AG04450 (cell line): ENCODE measurements at regions of chr3 and their contacts with region 1.

Region 1: GRCh38 chr3:41198950-41199865 is at the start of gene CTNNB1:
- DNase-seq: peak; percentile 94
- H3K4me3 ChIP-seq: peak within 1 kb of the TSS; percentile 94
- H3K27ac ChIP-seq: peak within 1 kb of the TSS; percentile 89
- H3K27me3 ChIP-seq: no peaks in the 10 kb centered on the region
- CTCF ChIP-seq: no peak
- polyA plus RNA-seq, gene CTNNB1: 352 and 453 TPM in 2 replicates

Region 2: DNA sequence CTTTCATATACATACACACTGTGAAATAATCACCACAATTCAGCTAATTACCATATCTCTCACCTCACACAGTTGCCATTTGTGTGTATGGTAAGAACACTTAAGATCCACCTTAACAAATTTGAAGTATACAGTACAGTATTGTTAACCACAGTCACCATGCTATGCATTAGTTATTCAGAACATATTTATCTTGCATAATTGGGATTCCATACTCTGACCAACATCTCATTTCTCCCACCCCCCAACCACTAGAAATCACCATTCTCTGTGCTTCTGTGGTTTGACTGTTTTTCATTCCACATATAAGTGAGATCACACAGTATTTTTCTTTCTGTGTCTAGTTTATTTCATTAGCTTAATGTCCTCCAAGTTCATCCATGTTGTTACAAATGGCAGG is 247.6 kb before region 1 on chr3:
- CTCF ChIA-PET with region 1: no interaction called
- POLR2A ChIA-PET with region 1: no interaction called
- DNase-seq: no peak
- H3K4me3 ChIP-seq: no peak overlapping the region
- H3K27ac ChIP-seq: no peak overlapping the region
- H3K27me3 ChIP-seq: no peaks in the 10 kb centered on the region
- CTCF ChIP-seq: no peak

Region 3: GRCh38 chr3:41175365-41175764 is 23.8 kb before region 1 on chr3:
- CTCF ChIA-PET with region 1: no interaction called
- POLR2A ChIA-PET with region 1: interaction called, 14 read pairs
- DNase-seq: no peak
- H3K4me3 ChIP-seq: no peak overlapping the region
- H3K27ac ChIP-seq: no peak overlapping the region
- H3K27me3 ChIP-seq: peaks cover 14% of the 10 kb centered on the region
- CTCF ChIP-seq: no peak

Region 4: GRCh38 chr3:41182525-41183059 is 16.6 kb before region 1 on chr3:
- CTCF ChIA-PET with region 1: no interaction called
- POLR2A ChIA-PET with region 1: interaction called, 12 read pairs
- DNase-seq: no peak
- H3K4me3 ChIP-seq: no peak overlapping the region
- H3K27ac ChIP-seq: no peak overlapping the region
- H3K27me3 ChIP-seq: peaks cover 6% of the 10 kb centered on the region
- CTCF ChIP-seq: no peak

Region 5: DNA sequence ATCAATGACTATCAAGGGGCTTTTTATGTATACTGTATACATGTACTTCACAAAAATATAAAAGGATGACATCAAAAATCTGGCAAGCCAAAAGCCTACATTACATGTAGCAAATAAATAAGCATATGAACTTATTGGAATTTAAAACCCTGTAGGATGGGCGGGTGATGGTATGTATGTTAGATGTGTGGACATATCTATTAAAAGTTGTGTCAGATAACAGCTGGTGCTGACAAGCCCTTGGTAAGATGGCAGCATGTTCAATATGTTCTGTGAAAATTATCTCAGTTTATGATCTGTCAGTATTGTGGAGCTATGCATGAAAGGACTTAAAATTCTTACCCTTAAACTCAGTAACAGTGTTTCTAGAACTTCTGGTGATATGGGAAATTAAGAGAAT is 20.2 kb after region 1 on chr3:
- CTCF ChIA-PET with region 1: interaction called, 11 read pairs
- POLR2A ChIA-PET with region 1: interaction called, 4 read pairs
- DNase-seq: no peak
- H3K4me3 ChIP-seq: no peak overlapping the region
- H3K27ac ChIP-seq: no peak overlapping the region
- H3K27me3 ChIP-seq: no peaks in the 10 kb centered on the region
- CTCF ChIP-seq: no peak

Region 6: DNA sequence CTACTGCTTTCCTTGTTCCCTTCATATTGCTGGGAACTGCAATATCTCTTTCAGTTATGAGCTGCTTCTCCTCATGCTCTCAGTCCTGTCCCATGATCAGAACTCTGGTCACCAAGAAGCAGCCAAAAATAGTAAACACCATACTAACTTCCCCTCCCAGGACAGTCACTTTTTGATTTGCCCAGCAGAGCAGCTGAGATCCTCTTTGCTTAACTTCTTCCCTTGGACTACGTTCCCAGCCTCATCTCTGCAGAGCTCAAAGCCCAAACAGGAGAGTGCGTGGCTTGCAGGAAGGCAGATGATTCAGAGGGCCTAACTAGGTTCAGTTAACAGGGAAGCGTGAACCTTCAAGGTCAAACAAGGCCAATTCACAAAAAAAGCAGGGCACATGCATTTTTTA is 153.3 kb after region 1 on chr3:
- CTCF ChIA-PET with region 1: no interaction called
- POLR2A ChIA-PET with region 1: no interaction called
- DNase-seq: no peak
- H3K4me3 ChIP-seq: no peak overlapping the region
- H3K27ac ChIP-seq: no peak overlapping the region
- H3K27me3 ChIP-seq: peaks cover 6% of the 10 kb centered on the region
- CTCF ChIP-seq: no peak

Region 7: DNA sequence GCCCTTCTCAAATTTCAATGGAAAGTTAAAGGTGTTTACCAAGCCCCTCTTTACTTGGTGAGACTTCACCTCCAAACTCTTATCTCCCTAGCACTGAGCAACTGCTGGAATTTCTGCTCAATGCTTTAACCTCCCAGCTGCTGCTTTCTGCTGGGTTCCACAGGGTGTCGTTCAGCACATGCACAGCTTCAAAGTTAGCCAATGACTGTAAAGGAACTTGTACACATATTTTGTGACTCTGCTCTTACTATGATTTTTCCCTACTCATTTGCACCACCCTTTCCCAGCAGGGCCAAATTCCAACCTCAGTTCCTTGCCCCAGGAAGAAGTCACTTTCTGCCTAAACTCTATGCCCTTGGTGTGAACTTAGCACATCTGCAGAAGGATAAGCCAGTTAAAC is 672.9 kb after region 1 on chr3:
- CTCF ChIA-PET with region 1: no interaction called
- POLR2A ChIA-PET with region 1: interaction called, 10 read pairs
- DNase-seq: no peak
- H3K4me3 ChIP-seq: no peak overlapping the region
- H3K27ac ChIP-seq: no peak overlapping the region
- H3K27me3 ChIP-seq: no peaks in the 10 kb centered on the region
- CTCF ChIP-seq: no peak